ENCODE measurements at regions of chr11 and their contacts with region 1.

Region 1: DNA sequence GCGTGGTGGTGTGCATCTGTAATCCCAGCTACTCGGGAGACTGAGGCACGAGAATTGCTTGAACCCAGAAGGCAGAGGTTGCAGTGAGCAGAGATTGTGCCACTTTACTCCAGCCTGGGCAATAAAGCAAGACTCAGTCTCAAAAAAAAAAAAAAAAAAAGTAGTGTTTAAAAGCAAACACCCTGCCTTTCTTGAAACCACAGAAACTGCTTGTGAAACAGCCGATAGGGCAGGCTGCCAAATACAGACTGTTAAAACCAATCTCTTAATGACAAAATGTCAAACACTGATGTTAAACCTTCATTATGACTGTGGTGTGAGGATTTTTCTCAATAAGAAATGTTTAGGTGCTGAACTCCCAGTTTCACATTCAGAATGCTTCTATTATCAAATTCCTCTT is 27.3 kb downstream of the MARK2 start:
- DNase-seq: peak; percentile 97
- H3K4me3 Mint-ChIP-seq: peak overlapping the region; percentile 11
- H3K27ac Mint-ChIP-seq: no peak overlapping the region
- H3K4me1 Mint-ChIP-seq: peaks cover 80% of the 10 kb centered on the region
- H3K27me3 Mint-ChIP-seq: no peaks in the 10 kb centered on the region

Region 2: DNA sequence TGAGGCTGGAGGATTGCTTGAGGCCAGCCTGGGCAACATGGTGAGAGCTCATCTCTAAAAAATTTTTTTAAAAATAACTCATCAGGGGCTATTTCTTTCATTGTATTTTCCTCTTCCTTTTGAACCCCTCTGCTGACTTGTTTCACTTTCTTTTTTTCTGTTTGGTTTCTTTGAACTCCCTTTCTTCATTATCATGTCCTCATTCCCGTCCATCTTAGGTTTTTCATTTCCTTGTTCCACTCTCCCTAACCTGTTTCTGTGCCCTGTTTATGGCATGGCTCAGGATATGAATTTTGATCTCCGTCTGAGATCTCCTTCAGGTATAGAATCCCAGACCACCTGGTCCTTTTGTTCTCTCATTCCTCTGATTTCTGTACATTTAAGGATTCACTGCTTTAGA is 14.8 kb before region 1 on chr11:
- CTCF ChIA-PET with region 1: interaction called, 3 read pairs
- intact Hi-C with region 1: loop called (anchors 2 kb)
- DNase-seq: no peak
- H3K4me3 Mint-ChIP-seq: peak overlapping the region; percentile 10
- H3K27ac Mint-ChIP-seq: peak overlapping the region; percentile 26
- H3K4me1 Mint-ChIP-seq: peaks cover 65% of the 10 kb centered on the region
- H3K27me3 Mint-ChIP-seq: no peaks in the 10 kb centered on the region

Region 3: DNA sequence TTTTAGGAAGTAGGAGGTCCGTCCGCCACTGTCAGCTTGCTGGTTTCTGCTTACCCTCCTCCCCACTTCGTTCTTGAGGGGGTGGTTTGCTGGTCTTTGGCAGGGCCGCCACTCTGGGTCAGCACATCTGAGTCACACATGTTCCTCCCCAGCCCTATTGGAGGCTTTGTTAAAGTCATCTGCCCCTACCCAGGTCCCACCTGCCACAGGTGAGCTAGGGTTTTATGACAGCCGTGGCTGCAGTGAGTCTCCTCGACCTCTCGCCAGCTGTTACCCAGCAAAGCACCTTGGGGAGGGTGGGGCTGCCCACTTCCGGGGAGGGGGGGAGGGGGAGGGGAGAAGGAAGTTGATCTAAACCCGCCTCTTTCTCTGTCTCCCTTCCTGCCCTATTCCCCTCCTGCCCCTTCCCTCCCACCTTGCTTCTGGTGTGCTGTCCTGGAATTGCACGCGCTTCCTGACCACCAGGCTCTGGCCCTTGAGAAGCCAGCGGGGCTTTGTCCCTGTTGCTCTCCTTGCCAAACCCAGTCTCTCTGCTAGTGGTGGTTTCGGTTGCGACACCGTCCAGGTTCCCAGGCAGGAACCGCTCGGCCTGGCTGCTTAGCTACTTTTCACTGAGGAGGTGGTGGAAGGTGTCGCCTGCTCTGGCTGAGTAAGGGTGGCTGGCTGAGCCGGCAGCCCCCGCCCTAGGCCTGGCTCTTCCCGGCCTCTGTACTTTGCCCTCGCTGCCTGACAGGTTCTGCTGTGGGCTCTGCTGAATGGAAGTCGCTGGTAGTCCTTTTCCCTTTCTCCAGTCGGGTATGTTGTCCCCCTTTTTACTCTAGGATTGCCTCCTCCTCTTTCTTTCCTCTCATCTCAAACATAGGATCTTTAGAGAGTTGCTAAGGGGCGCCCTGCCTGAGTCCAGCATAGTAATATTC is 22.2 kb after region 1 on chr11:
- CTCF ChIA-PET with region 1: interaction called, 5 read pairs
- intact Hi-C with region 1: loop called (anchors 2 kb)
- DNase-seq: peak; percentile 78
- H3K4me3 Mint-ChIP-seq: peak overlapping the region; percentile 83
- H3K27ac Mint-ChIP-seq: peak overlapping the region; percentile 87
- H3K4me1 Mint-ChIP-seq: peaks cover 79% of the 10 kb centered on the region
- H3K27me3 Mint-ChIP-seq: no peaks in the 10 kb centered on the region

Region 4: DNA sequence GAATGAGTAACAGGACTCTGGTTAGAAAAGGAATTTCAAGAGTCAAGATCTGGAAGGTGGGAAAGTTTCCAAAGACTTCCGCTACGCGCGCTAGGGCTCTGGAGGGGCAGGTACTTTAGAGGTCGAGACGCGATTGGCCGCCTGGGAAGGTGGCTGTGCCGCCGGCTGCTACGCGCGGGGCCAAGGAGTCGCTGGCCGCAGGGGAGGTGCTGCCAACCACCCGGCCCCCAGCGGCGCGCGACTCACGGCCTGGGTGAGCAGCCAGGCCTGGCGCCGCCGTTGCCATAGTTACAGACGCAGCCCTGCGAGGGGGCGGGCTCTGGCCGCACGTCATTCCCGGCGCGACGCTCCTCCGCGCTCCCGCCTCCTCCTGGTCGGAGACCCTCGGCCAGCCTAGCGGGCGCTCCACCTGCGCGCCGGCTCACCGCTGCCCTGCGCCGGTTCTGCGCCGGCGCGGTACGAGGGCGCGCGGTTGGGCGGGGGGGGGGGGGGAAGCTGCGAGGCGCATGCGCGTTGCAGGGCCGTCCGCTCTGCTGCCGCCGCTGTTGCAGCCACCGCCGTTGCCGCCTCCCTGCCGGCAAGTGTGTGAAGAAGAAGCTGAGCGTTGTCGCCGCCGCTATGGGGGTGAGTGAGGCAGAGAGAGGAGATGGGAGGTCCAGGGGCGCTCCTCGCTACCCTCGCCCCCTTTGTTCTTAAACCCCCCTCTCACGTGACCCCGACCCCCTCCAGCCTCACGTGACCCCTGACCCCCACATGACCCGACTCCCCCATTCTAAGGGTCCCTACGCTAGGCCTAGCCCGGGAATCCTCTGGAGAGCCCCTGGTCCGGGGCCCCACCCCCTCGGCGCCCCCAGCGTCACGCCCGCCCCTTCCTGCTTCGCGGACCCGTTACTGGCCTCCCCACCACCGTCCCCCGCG is 72.5 kb after region 1 on chr11 and contains the start of gene NAA40:
- CTCF ChIA-PET with region 1: no interaction called
- intact Hi-C with region 1: loop called (anchors 2 kb)
- DNase-seq: peak; percentile 90
- H3K4me3 Mint-ChIP-seq: peak within 1 kb of the TSS; percentile 77
- H3K27ac Mint-ChIP-seq: peak within 1 kb of the TSS; percentile 52
- H3K4me1 Mint-ChIP-seq: peaks cover 13% of the 10 kb centered on the region
- H3K27me3 Mint-ChIP-seq: no peaks in the 10 kb centered on the region
- total RNA-seq, gene NAA40: 10.3 to 13.2 TPM

Region 5: GRCh38 chr11:64710418-64711137 is 844.4 kb after region 1 on chr11:
- CTCF ChIA-PET with region 1: no interaction called
- intact Hi-C with region 1: no loop called
- DNase-seq: no peak
- H3K4me3 Mint-ChIP-seq: no peak overlapping the region
- H3K27ac Mint-ChIP-seq: no peak overlapping the region
- H3K4me1 Mint-ChIP-seq: peaks cover 14% of the 10 kb centered on the region
- H3K27me3 Mint-ChIP-seq: peaks cover 53% of the 10 kb centered on the region

Measured in activated naive CD4-positive, alpha-beta T cell treated with anti-CD3 and anti-CD28 coated beads for 36 hours (primary cell).